ENCODE measurements at regions of chr1 and their contacts with region 1.

Region 1: DNA sequence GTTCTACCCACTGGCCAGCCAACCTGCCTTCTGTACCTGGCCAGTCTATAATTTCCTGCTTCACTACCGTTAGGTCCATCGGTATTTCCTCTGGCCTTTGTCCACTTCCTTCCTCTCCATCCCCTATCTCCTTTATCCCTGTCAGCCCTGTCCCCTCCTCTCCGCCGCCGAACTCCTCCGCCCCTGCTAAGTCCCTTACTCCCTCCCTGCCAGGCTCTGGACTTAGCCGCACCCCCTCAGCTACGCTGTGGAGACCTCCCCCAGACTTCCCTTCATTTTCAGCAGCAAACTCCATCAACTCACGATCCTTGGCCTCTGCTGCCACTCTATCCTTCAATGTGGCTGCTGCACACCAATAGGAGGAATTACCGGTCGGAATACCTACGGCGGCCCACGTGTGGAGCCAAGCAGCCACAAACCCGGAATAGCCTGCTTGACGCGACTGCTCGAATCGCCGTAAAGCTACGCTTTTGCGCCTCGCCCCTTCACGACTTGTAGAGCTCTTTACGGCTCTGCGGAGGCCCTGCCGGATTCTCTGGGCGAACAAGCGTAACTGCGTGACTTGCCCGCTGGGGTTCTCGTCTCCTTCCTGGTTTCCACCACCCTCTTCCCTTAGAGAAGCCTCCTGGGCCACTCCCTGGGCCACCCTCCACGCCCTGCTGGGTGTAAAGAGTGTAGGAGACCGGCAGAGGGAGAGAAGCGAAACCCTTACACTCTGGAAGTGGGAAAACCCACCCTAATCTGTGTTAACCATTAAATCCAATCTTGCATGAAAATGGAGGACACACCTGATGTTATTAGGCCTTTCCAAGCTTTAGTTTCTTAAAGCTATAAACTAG is at the start of gene ZNHIT6:
- DNase-seq: peak; percentile 62 to 94 (median 89)
- ATAC-seq: peak; percentile 99
- H3K4me3 ChIP-seq: peak within 1 kb of the TSS; percentile 90
- H3K4me3 Mint-ChIP-seq: no peak within 1 kb of the TSS
- H3K27ac ChIP-seq: peak within 1 kb of the TSS; percentile 77
- H3K27ac Mint-ChIP-seq: no peak within 1 kb of the TSS
- H3K4me1 ChIP-seq: peaks cover 14 to 21% of the 10 kb centered on the region in 2 donors
- H3K4me1 Mint-ChIP-seq: peaks cover 11 to 33% (median 18%) of the 10 kb centered on the region in 7 donors
- H3K27me3 ChIP-seq: no peaks in the 10 kb centered on the region
- H3K27me3 Mint-ChIP-seq: no peaks in the 10 kb centered on the region
- total RNA-seq, gene ZNHIT6: 13.8 to 22.2 (median 20.2) TPM

Region 2: GRCh38 chr1:84298328-84298683 is 1409.9 kb before region 1 on chr1:
- CTCF ChIA-PET with region 1: no interaction called
- POLR2A ChIA-PET with region 1: no interaction called
- intact Hi-C with region 1: loop called in 1 of 2 experiments (anchors 5 kb)
- DNase-seq: peak; percentile 40 to 65 (median 46)
- ATAC-seq: peak; percentile 88
- H3K4me3 ChIP-seq: peak overlapping the region; percentile 92
- H3K4me3 Mint-ChIP-seq: peak overlapping the region; percentile 83 to 95 (median 90)
- H3K27ac ChIP-seq: peak overlapping the region; percentile 69
- H3K27ac Mint-ChIP-seq: peak overlapping the region; percentile 67 to 85 (median 79)
- H3K4me1 ChIP-seq: peaks cover 4 to 25% of the 10 kb centered on the region in 2 donors
- H3K4me1 Mint-ChIP-seq: peaks cover 17 to 52% (median 42%) of the 10 kb centered on the region in 7 donors
- H3K27me3 ChIP-seq: no peaks in the 10 kb centered on the region
- H3K27me3 Mint-ChIP-seq: peaks cover 0 to 16% (median 6%) of the 10 kb centered on the region in 5 donors

Region 3: GRCh38 chr1:85576642-85577418 is 131.4 kb before region 1 on chr1:
- CTCF ChIA-PET with region 1: no interaction called
- POLR2A ChIA-PET with region 1: no interaction called
- intact Hi-C with region 1: loop called in 1 of 2 experiments (anchors 5 kb)
- DNase-seq: peak in 1 of 9 donors; percentile 73
- ATAC-seq: peak; percentile 33
- H3K4me3 ChIP-seq: no peak overlapping the region
- H3K4me3 Mint-ChIP-seq: peak overlapping the region; percentile 44 to 79 (median 69)
- H3K27ac ChIP-seq: no peak overlapping the region
- H3K27ac Mint-ChIP-seq: peak overlapping the region in 2 of 9 donors; percentile 10 to 23
- H3K4me1 ChIP-seq: no peaks in the 10 kb centered on the region
- H3K4me1 Mint-ChIP-seq: peaks cover 5 to 33% (median 29%) of the 10 kb centered on the region in 7 donors
- H3K27me3 ChIP-seq: peaks cover 0 to 12% of the 10 kb centered on the region in 2 donors
- H3K27me3 Mint-ChIP-seq: peaks cover 65 to 74% (median 73%) of the 10 kb centered on the region in 5 donors

Region 4: GRCh38 chr1:85692730-85693314 is 15.4 kb before region 1 on chr1:
- CTCF ChIA-PET with region 1: interaction called, 6 read pairs
- POLR2A ChIA-PET with region 1: interaction called, 9 read pairs
- intact Hi-C with region 1: loop called in 1 of 2 experiments (anchors 2 kb)
- DNase-seq: no peak
- ATAC-seq: no peak
- H3K4me3 ChIP-seq: no peak overlapping the region
- H3K4me3 Mint-ChIP-seq: no peak overlapping the region
- H3K27ac ChIP-seq: no peak overlapping the region
- H3K27ac Mint-ChIP-seq: peak overlapping the region in 1 of 9 donors; percentile 13
- H3K4me1 ChIP-seq: no peaks in the 10 kb centered on the region
- H3K4me1 Mint-ChIP-seq: peaks cover 4 to 40% (median 31%) of the 10 kb centered on the region in 7 donors
- H3K27me3 ChIP-seq: no peaks in the 10 kb centered on the region
- H3K27me3 Mint-ChIP-seq: no peaks in the 10 kb centered on the region

Region 5: DNA sequence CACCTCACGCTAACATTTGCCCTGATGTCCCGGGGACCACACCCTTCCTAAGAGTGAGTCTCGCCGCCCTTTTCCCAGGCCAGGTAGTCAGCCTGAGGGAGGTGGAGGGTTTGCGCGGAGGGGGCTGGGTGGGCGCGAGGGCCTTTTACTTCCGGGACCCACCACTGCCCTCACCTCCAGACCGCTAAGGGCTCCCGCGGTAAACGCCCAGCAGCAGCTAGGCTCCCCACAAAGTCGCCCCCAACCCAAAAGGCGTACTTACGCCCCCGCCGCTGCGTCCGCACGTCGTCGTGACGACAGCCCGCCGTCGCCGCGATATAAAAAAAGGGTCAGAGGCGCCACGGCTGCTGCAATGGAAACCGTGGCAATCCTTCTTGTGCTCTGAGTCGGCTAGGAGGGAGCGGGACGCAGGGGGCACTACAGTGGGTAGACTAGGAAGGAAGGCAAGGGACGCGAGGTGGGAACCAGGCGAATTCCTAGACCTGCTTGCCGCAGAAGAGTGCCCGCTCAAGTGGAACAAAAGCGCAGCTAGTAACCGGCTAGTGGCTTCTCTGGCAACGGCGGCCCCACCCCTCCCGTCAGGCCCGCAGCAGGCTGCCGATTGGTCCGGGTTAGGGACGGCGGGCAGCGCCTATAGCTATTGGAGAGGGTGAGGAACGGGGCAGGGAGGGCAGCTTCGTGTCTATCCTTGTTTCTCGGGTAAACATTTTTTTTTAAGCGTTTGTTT is 687.7 kb after region 1 on chr1 and contains the start of gene ODF2L:
- CTCF ChIA-PET with region 1: no interaction called
- POLR2A ChIA-PET with region 1: no interaction called
- intact Hi-C with region 1: loop called in 1 of 2 experiments (anchors 2 kb)
- DNase-seq: peak; percentile 73 to 92 (median 90)
- ATAC-seq: peak; percentile 100
- H3K4me3 ChIP-seq: peak within 1 kb of the TSS; percentile 80
- H3K4me3 Mint-ChIP-seq: peak within 1 kb of the TSS; percentile 90 to 100 (median 98)
- H3K27ac ChIP-seq: peak within 1 kb of the TSS; percentile 90
- H3K27ac Mint-ChIP-seq: peak within 1 kb of the TSS; percentile 94 to 99 (median 98)
- H3K4me1 ChIP-seq: peaks cover 17 to 20% of the 10 kb centered on the region in 2 donors
- H3K4me1 Mint-ChIP-seq: peaks cover 23 to 70% (median 58%) of the 10 kb centered on the region in 7 donors
- H3K27me3 ChIP-seq: no peaks in the 10 kb centered on the region
- H3K27me3 Mint-ChIP-seq: peaks cover 0 to 7% (median 0%) of the 10 kb centered on the region in 5 donors
- total RNA-seq, gene ODF2L: 50.3 to 75.3 (median 52.2) TPM

Region 6: DNA sequence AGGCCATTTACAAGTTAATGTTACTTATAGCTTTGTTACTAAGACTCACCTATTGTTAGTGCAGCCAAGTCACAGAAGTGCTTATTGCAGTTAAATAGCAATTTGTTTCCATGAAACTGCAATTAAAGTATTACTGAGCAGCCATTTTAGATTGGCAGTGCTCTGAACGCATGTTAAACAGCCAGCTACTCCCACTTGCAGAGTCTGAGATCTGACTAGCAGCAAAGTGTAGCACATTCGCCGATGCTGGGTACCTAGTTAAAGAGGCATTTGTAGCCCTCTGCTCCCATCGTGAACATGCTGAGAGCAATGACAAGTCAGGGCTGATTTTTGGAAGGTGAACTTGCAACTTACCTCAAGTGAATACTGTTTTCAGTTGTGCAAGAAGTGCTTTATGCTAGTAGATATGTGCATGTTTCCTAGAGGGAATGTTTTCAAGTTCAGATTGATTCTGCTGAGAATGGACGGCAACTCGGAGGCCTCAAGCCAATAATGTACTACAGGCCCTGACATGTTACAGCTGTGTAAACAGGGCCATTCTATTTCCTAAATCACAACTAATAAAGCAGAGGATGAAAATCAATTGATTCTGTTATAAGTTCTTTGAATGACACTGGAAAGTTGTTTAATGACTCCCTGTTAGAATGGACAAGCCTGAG is 1640.3 kb after region 1 on chr1:
- CTCF ChIA-PET with region 1: no interaction called
- POLR2A ChIA-PET with region 1: no interaction called
- intact Hi-C with region 1: loop called in 1 of 2 experiments (anchors 10 kb)
- DNase-seq: no peak
- ATAC-seq: no peak
- H3K4me3 ChIP-seq: no peak overlapping the region
- H3K4me3 Mint-ChIP-seq: no peak overlapping the region
- H3K27ac ChIP-seq: no peak overlapping the region
- H3K27ac Mint-ChIP-seq: peak overlapping the region in 2 of 9 donors; percentile 15 to 65
- H3K4me1 ChIP-seq: no peaks in the 10 kb centered on the region
- H3K4me1 Mint-ChIP-seq: peaks cover 0 to 3% (median 0%) of the 10 kb centered on the region in 7 donors
- H3K27me3 ChIP-seq: no peaks in the 10 kb centered on the region
- H3K27me3 Mint-ChIP-seq: peaks cover 0 to 9% (median 0%) of the 10 kb centered on the region in 5 donors

Measured in naive thymus-derived CD4-positive, alpha-beta T cell (primary cell).